ENCODE measurements at regions of chr7 and their contacts with region 1.

Region 1: DNA sequence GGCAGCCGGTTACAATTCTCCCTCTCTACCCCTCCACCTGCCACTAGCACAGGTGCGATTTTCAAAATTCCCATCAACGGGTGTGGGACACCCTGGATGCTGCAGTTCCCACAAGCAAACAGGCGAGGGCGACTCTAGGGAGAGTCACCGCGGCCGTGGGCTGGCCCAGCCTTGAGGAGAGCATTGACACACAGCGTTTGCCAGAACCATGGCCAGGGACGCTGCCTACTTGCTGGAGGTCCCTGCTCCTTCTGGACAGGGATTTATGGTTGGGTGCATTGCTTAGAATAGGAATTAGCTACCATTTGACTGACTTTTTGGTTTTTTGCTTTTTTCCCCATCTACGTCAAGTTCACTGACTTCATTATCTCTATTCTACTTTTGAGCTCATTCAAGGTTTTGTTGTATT is 19.0 kb upstream of the CLDN4 start:
- DNase-seq: peak; percentile 65
- H3K4me3 ChIP-seq: no peak overlapping the region
- H3K27ac ChIP-seq: no peak overlapping the region
- H3K4me1 ChIP-seq: no peaks in the 10 kb centered on the region
- H3K27me3 ChIP-seq: no peaks in the 10 kb centered on the region
- CTCF ChIP-seq: peak; percentile 18 to 69 (median 36)
- POLR2A ChIP-seq: no peak

Region 2: DNA sequence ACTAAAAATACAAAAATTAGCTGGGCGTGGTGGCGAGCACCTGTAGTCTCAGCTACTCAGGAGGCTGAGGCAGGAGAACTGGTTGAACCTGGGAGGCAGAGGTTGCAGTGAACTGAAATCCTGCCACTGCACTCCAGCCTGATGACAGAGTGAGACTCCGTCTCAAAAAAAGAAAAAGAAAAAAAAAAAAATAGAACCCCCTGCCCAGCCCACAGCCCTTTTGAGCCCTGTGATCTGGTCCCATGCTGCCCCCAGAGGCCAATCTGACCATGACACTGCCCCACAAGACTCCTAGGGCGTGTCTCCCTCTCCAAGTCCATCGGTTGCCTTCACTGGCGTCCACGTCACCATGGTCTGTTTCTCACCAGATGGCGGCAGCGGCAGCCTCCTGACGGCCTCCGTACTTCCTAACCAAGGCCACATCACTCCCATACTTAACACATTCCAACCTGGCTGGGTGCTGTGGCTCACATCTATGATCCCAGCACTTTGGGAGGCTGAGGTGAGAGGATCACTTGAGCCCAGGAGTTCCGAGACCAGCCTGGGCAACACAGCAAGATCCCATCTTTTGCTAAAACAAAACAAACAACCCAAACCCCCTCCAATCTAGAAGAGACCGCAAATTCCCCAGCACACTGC is 110.3 kb before region 1 on chr7:
- intact Hi-C with region 1: no loop called
- DNase-seq: peak; percentile 70
- H3K4me3 ChIP-seq: no peak overlapping the region
- H3K27ac ChIP-seq: no peak overlapping the region
- H3K4me1 ChIP-seq: peaks cover 5% of the 10 kb centered on the region
- H3K27me3 ChIP-seq: no peaks in the 10 kb centered on the region
- CTCF ChIP-seq: peak; percentile 24 to 61 (median 42)
- POLR2A ChIP-seq: no peak

Region 3: GRCh38 chr7:73792594-73793292 is 19.0 kb before region 1 on chr7:
- intact Hi-C with region 1: loop called (anchors 2 kb)
- DNase-seq: peak; percentile 93
- H3K4me3 ChIP-seq: peak overlapping the region in 1 of 2 donors; percentile 11
- H3K27ac ChIP-seq: no peak overlapping the region
- H3K4me1 ChIP-seq: no peaks in the 10 kb centered on the region
- H3K27me3 ChIP-seq: no peaks in the 10 kb centered on the region
- CTCF ChIP-seq: no peak
- POLR2A ChIP-seq: no peak

Measured in testis (tissue), 5 donors.